ENCODE measurements at regions of chr5 and their contacts with region 1.

Region 1: DNA sequence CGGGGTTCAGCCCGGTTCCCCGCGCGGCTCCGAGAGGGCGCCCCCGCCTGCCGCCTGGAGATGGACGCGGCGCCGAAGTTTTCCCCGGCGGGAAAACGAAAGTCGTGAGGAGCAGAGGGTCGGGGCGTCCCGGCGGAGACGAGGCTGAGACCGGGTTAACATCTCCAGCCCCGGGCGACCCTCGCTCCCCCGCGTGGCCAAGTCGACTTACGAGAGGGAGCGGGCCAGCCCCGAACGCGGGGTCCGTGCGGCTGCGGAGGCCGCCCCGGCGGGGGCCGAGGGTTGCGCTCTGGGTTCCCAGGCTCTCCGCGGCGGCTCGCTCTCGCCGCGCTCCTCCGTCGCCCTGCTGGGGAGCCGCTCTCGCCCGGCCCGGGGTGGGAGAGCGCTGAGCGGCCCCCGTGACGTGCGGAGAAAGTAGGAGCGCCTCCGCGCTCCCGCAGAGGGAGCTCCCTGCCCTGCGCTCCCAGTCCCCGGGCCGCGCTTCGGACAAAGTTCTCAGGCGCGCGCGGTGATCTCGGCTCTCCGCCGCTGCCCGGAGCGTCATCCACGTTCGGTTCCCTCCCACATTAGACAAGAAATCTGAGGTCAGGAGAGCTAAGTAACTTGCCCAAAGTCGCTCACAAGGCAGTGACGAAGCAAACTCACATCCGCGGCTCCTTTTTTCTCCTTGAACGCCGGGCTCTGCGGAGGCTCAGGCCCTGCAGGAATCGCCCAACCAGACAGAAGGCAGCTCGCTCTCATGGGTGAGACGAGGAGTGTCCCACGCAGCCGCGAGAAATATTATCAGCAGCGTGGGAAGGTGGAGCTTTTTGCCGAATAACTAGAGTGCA is 1.2 kb upstream of the GCNT4 start:
- DNase-seq: peak in 8 of 9 donors; percentile 49 to 81 (median 73)
- ATAC-seq: peak; percentile 57
- H3K4me3 ChIP-seq: peak overlapping the region; percentile 67
- H3K4me3 Mint-ChIP-seq: peak overlapping the region; percentile 89 to 95 (median 93)
- H3K27ac ChIP-seq: peak overlapping the region; percentile 87
- H3K27ac Mint-ChIP-seq: peak overlapping the region; percentile 84 to 99 (median 97)
- H3K4me1 ChIP-seq: peaks cover 64 to 75% of the 10 kb centered on the region in 2 donors
- H3K4me1 Mint-ChIP-seq: peaks cover 57 to 86% (median 79%) of the 10 kb centered on the region in 7 donors
- H3K27me3 ChIP-seq: no peaks in the 10 kb centered on the region
- H3K27me3 Mint-ChIP-seq: peaks cover 0 to 17% (median 0%) of the 10 kb centered on the region in 5 donors

Region 2: GRCh38 chr5:73838901-73839300 is 1214.6 kb before region 1 on chr5:
- CTCF ChIA-PET with region 1: no interaction called
- POLR2A ChIA-PET with region 1: no interaction called
- intact Hi-C with region 1: no loop called
- DNase-seq: no peak
- ATAC-seq: no peak
- H3K4me3 ChIP-seq: no peak overlapping the region
- H3K4me3 Mint-ChIP-seq: no peak overlapping the region
- H3K27ac ChIP-seq: no peak overlapping the region
- H3K27ac Mint-ChIP-seq: no peak overlapping the region
- H3K4me1 ChIP-seq: no peaks in the 10 kb centered on the region
- H3K4me1 Mint-ChIP-seq: no peaks in the 10 kb centered on the region
- H3K27me3 ChIP-seq: no peaks in the 10 kb centered on the region
- H3K27me3 Mint-ChIP-seq: peaks cover 15 to 53% (median 35%) of the 10 kb centered on the region in 5 donors

Region 3: GRCh38 chr5:73883646-73884045 is 1169.9 kb before region 1 on chr5:
- CTCF ChIA-PET with region 1: no interaction called
- POLR2A ChIA-PET with region 1: no interaction called
- intact Hi-C with region 1: no loop called
- DNase-seq: no peak
- ATAC-seq: no peak
- H3K4me3 ChIP-seq: no peak overlapping the region
- H3K4me3 Mint-ChIP-seq: no peak overlapping the region
- H3K27ac ChIP-seq: no peak overlapping the region
- H3K27ac Mint-ChIP-seq: no peak overlapping the region
- H3K4me1 ChIP-seq: no peaks in the 10 kb centered on the region
- H3K4me1 Mint-ChIP-seq: no peaks in the 10 kb centered on the region
- H3K27me3 ChIP-seq: no peaks in the 10 kb centered on the region
- H3K27me3 Mint-ChIP-seq: peaks cover 16 to 38% (median 24%) of the 10 kb centered on the region in 5 donors

Region 4: GRCh38 chr5:74919487-74919886 is 134.0 kb before region 1 on chr5:
- CTCF ChIA-PET with region 1: interaction called, 12 read pairs
- POLR2A ChIA-PET with region 1: no interaction called
- intact Hi-C with region 1: no loop called
- DNase-seq: peak in 7 of 9 donors; percentile 12 to 54 (median 29)
- ATAC-seq: peak; percentile 80
- H3K4me3 ChIP-seq: no peak overlapping the region
- H3K4me3 Mint-ChIP-seq: no peak overlapping the region
- H3K27ac ChIP-seq: no peak overlapping the region
- H3K27ac Mint-ChIP-seq: no peak overlapping the region
- H3K4me1 ChIP-seq: no peaks in the 10 kb centered on the region
- H3K4me1 Mint-ChIP-seq: no peaks in the 10 kb centered on the region
- H3K27me3 ChIP-seq: no peaks in the 10 kb centered on the region
- H3K27me3 Mint-ChIP-seq: peaks cover 0 to 6% (median 4%) of the 10 kb centered on the region in 5 donors

Region 5: GRCh38 chr5:75034137-75034750 is 19.3 kb before region 1 on chr5:
- CTCF ChIA-PET with region 1: interaction called, 36 read pairs
- POLR2A ChIA-PET with region 1: interaction called, 61 read pairs
- intact Hi-C with region 1: loop called (anchors 1 to 2 kb)
- DNase-seq: peak in 7 of 9 donors; percentile 23 to 69 (median 52)
- ATAC-seq: peak; percentile 74
- H3K4me3 ChIP-seq: peak overlapping the region; percentile 10
- H3K4me3 Mint-ChIP-seq: peak overlapping the region; percentile 19 to 76 (median 62)
- H3K27ac ChIP-seq: peak overlapping the region; percentile 31
- H3K27ac Mint-ChIP-seq: peak overlapping the region in 8 of 9 donors; percentile 76 to 97 (median 82)
- H3K4me1 ChIP-seq: peaks cover 25 to 42% of the 10 kb centered on the region in 2 donors
- H3K4me1 Mint-ChIP-seq: peaks cover 22 to 94% (median 85%) of the 10 kb centered on the region in 7 donors
- H3K27me3 ChIP-seq: no peaks in the 10 kb centered on the region
- H3K27me3 Mint-ChIP-seq: no peaks in the 10 kb centered on the region

Region 6: GRCh38 chr5:75108931-75109596 is 55.5 kb after region 1 on chr5:
- CTCF ChIA-PET with region 1: interaction called, 7 read pairs
- POLR2A ChIA-PET with region 1: interaction called, 8 read pairs
- intact Hi-C with region 1: loop called in 1 of 2 experiments (anchors 1 kb)
- DNase-seq: peak in 6 of 9 donors; percentile 16 to 39 (median 26)
- ATAC-seq: peak; percentile 47
- H3K4me3 ChIP-seq: no peak overlapping the region
- H3K4me3 Mint-ChIP-seq: peak overlapping the region in 2 of 10 donors; percentile 1 to 7
- H3K27ac ChIP-seq: no peak overlapping the region
- H3K27ac Mint-ChIP-seq: peak overlapping the region in 8 of 9 donors; percentile 7 to 82 (median 67)
- H3K4me1 ChIP-seq: peaks cover 0 to 19% of the 10 kb centered on the region in 2 donors
- H3K4me1 Mint-ChIP-seq: peaks cover 0 to 49% (median 35%) of the 10 kb centered on the region in 7 donors
- H3K27me3 ChIP-seq: no peaks in the 10 kb centered on the region
- H3K27me3 Mint-ChIP-seq: peaks cover 0 to 3% (median 0%) of the 10 kb centered on the region in 5 donors

Region 7: GRCh38 chr5:75265731-75266130 is 212.2 kb after region 1 on chr5:
- CTCF ChIA-PET with region 1: interaction called, 16 read pairs
- POLR2A ChIA-PET with region 1: interaction called, 4 read pairs
- intact Hi-C with region 1: loop called (anchors 1 kb)
- DNase-seq: peak in 7 of 9 donors; percentile 27 to 65 (median 55)
- ATAC-seq: peak; percentile 75
- H3K4me3 ChIP-seq: no peak overlapping the region
- H3K4me3 Mint-ChIP-seq: no peak overlapping the region
- H3K27ac ChIP-seq: no peak overlapping the region
- H3K27ac Mint-ChIP-seq: peak overlapping the region in 1 of 9 donors; percentile 56
- H3K4me1 ChIP-seq: no peaks in the 10 kb centered on the region
- H3K4me1 Mint-ChIP-seq: peaks cover 0 to 5% (median 0%) of the 10 kb centered on the region in 7 donors
- H3K27me3 ChIP-seq: no peaks in the 10 kb centered on the region
- H3K27me3 Mint-ChIP-seq: peaks cover 0 to 11% (median 4%) of the 10 kb centered on the region in 5 donors

Region 8: DNA sequence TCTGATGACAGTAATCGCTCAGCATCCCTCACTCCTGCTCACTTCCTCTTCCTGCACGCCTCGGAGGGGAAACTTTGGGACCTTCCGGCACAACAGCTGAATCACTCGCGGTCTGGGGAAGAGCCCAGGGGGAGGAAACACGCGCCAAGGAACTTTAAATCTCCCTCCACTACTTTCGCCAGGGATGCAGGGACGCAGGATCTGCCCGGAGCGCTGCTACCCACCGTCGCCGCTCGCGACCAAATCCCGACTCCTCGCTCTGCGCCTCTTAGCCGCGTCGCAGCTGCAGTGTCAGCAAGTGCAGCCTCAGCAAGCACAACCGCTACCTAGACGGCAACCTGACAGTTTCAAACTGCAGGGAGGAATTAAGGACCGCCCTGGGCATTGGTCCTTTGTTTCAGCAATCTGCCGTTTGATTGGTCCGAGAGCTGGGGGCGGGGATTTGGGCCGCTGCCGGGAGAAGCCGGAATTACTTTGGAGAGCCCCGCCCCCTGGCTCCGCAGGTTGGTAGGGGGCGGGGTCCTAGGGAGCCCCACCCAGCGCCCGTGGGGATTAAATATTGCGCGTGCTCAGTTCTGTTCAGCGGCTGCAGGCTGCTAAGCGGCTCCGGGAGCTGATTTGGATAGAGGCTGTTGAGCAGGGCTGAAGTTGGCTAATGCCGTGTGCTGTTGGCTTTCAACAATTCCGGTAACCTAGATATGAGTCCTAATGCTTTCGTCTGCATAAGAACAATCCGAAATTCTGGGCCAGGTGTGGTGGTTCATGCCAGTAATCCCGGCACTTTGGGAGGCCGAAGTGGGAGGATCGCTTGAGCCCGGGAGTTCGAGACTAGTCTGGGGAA is 663.8 kb after region 1 on chr5 and contains the start of gene POC5:
- CTCF ChIA-PET with region 1: no interaction called
- POLR2A ChIA-PET with region 1: no interaction called
- intact Hi-C with region 1: loop called (anchors 2 to 5 kb)
- DNase-seq: peak; percentile 93 to 99 (median 98)
- ATAC-seq: peak; percentile 97
- H3K4me3 ChIP-seq: peak within 1 kb of the TSS; percentile 74
- H3K4me3 Mint-ChIP-seq: peak within 1 kb of the TSS; percentile 93 to 100 (median 99)
- H3K27ac ChIP-seq: peak within 1 kb of the TSS; percentile 78
- H3K27ac Mint-ChIP-seq: peak within 1 kb of the TSS; percentile 92 to 100 (median 97)
- H3K4me1 ChIP-seq: peaks cover 5 to 8% of the 10 kb centered on the region in 2 donors
- H3K4me1 Mint-ChIP-seq: peaks cover 26 to 47% (median 37%) of the 10 kb centered on the region in 7 donors
- H3K27me3 ChIP-seq: no peaks in the 10 kb centered on the region
- H3K27me3 Mint-ChIP-seq: peaks cover 0 to 10% (median 0%) of the 10 kb centered on the region in 5 donors
- total RNA-seq, gene POC5: 8.5 to 17.9 (median 15.0) TPM

Region 9: GRCh38 chr5:77030097-77031071 is 1976.9 kb after region 1 on chr5 and contains the start of gene AGGF1:
- CTCF ChIA-PET with region 1: no interaction called
- POLR2A ChIA-PET with region 1: no interaction called
- intact Hi-C with region 1: loop called in 1 of 2 experiments (anchors 10 kb)
- DNase-seq: peak; percentile 69 to 93 (median 90)
- ATAC-seq: peak; percentile 99
- H3K4me3 ChIP-seq: peak within 1 kb of the TSS; percentile 94
- H3K4me3 Mint-ChIP-seq: peak within 1 kb of the TSS; percentile 77 to 97 (median 94)
- H3K27ac ChIP-seq: peak within 1 kb of the TSS; percentile 86
- H3K27ac Mint-ChIP-seq: peak within 1 kb of the TSS; percentile 88 to 97 (median 92)
- H3K4me1 ChIP-seq: peaks cover 11 to 24% of the 10 kb centered on the region in 2 donors
- H3K4me1 Mint-ChIP-seq: peaks cover 19 to 58% (median 40%) of the 10 kb centered on the region in 7 donors
- H3K27me3 ChIP-seq: no peaks in the 10 kb centered on the region
- H3K27me3 Mint-ChIP-seq: peaks cover 0 to 9% (median 0%) of the 10 kb centered on the region in 5 donors
- total RNA-seq, gene AGGF1: 17.2 to 32.4 (median 29.2) TPM